MCF 10A (cell line): ENCODE measurements at regions of chr20 and their contacts with region 1.

Region 1: GRCh38 chr20:20549718-20550117 is 162.7 kb downstream of the RALGAPA2 start:
- DNase-seq: peak; percentile 91
- H3K4me3 Mint-ChIP-seq: peak overlapping the region; percentile 19
- H3K27ac Mint-ChIP-seq: peak overlapping the region; percentile 74
- H3K4me1 Mint-ChIP-seq: peaks cover 25% of the 10 kb centered on the region
- H3K27me3 Mint-ChIP-seq: no peaks in the 10 kb centered on the region
- CTCF ChIP-seq: no peak

Region 2: GRCh38 chr20:20052074-20052970 is 497.4 kb before region 1 on chr20 and contains the starts of genes CFAP61 and CRNKL1:
- CTCF ChIA-PET with region 1: no interaction called
- POLR2A ChIA-PET with region 1: interaction called, 11 read pairs
- intact Hi-C with region 1: no loop called
- DNase-seq: peak; percentile 96
- H3K4me3 Mint-ChIP-seq: peak within 1 kb of the TSS; percentile 97
- H3K27ac Mint-ChIP-seq: peak within 1 kb of the TSS; percentile 96
- H3K4me1 Mint-ChIP-seq: peaks cover 10% of the 10 kb centered on the region
- H3K27me3 Mint-ChIP-seq: no peaks in the 10 kb centered on the region
- CTCF ChIP-seq: no peak
- total RNA-seq, gene CFAP61: 1.4 and 1.5 TPM in 2 replicates
- total RNA-seq, gene CRNKL1: 19.4 and 20.1 TPM in 2 replicates

Region 3: GRCh38 chr20:20489054-20489453 is 60.7 kb before region 1 on chr20:
- CTCF ChIA-PET with region 1: no interaction called
- POLR2A ChIA-PET with region 1: interaction called, 3 read pairs
- intact Hi-C with region 1: loop called (anchors 5 kb)
- DNase-seq: peak; percentile 33
- H3K4me3 Mint-ChIP-seq: peak overlapping the region; percentile 22
- H3K27ac Mint-ChIP-seq: peak overlapping the region; percentile 86
- H3K4me1 Mint-ChIP-seq: peaks cover 22% of the 10 kb centered on the region
- H3K27me3 Mint-ChIP-seq: no peaks in the 10 kb centered on the region
- CTCF ChIP-seq: no peak

Region 4: GRCh38 chr20:20505554-20505953 is 44.2 kb before region 1 on chr20:
- CTCF ChIA-PET with region 1: no interaction called
- POLR2A ChIA-PET with region 1: interaction called, 10 read pairs
- intact Hi-C with region 1: no loop called
- DNase-seq: no peak
- H3K4me3 Mint-ChIP-seq: no peak overlapping the region
- H3K27ac Mint-ChIP-seq: no peak overlapping the region
- H3K4me1 Mint-ChIP-seq: no peaks in the 10 kb centered on the region
- H3K27me3 Mint-ChIP-seq: no peaks in the 10 kb centered on the region
- CTCF ChIP-seq: no peak

Region 5: DNA sequence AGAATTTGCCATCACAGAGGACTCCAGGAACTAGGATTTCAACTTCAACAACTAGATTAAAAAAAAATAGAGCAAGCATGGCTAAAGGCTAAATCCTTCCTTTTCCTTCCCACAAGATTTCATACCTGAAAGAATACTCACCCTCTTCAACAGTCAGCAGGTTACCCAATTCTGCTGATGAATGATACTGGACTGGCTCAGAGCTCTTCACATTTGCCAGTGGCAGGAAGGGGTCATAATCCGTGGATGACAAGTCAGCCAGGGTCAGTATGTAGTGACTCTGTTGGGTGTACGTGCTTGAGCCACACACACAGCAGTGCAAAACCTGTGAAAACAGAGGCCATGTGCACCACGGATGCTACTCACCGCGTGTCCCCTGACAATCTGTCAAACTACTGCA is 28.9 kb before region 1 on chr20:
- CTCF ChIA-PET with region 1: interaction called, 3 read pairs
- POLR2A ChIA-PET with region 1: interaction called, 25 read pairs
- intact Hi-C with region 1: no loop called
- DNase-seq: peak; percentile 67
- H3K4me3 Mint-ChIP-seq: no peak overlapping the region
- H3K27ac Mint-ChIP-seq: peak overlapping the region; percentile 29
- H3K4me1 Mint-ChIP-seq: peaks cover 19% of the 10 kb centered on the region
- H3K27me3 Mint-ChIP-seq: no peaks in the 10 kb centered on the region
- CTCF ChIP-seq: no peak

Region 6: GRCh38 chr20:20561841-20562240 is 12.1 kb after region 1 on chr20:
- CTCF ChIA-PET with region 1: interaction called, 17 read pairs
- POLR2A ChIA-PET with region 1: interaction called, 21 read pairs
- intact Hi-C with region 1: no loop called
- DNase-seq: no peak
- H3K4me3 Mint-ChIP-seq: no peak overlapping the region
- H3K27ac Mint-ChIP-seq: no peak overlapping the region
- H3K4me1 Mint-ChIP-seq: no peaks in the 10 kb centered on the region
- H3K27me3 Mint-ChIP-seq: no peaks in the 10 kb centered on the region
- CTCF ChIP-seq: no peak

Region 7: GRCh38 chr20:20568604-20569205 is 19.0 kb after region 1 on chr20:
- CTCF ChIA-PET with region 1: interaction called, 5 read pairs
- POLR2A ChIA-PET with region 1: interaction called, 18 read pairs
- intact Hi-C with region 1: no loop called
- DNase-seq: peak; percentile 49
- H3K4me3 Mint-ChIP-seq: no peak overlapping the region
- H3K27ac Mint-ChIP-seq: no peak overlapping the region
- H3K4me1 Mint-ChIP-seq: no peaks in the 10 kb centered on the region
- H3K27me3 Mint-ChIP-seq: no peaks in the 10 kb centered on the region
- CTCF ChIP-seq: peak; percentile 81